Mammary epithelial cell (primary cell): ENCODE measurements at regions of chr21 and their contacts with region 1.

Region 1: DNA sequence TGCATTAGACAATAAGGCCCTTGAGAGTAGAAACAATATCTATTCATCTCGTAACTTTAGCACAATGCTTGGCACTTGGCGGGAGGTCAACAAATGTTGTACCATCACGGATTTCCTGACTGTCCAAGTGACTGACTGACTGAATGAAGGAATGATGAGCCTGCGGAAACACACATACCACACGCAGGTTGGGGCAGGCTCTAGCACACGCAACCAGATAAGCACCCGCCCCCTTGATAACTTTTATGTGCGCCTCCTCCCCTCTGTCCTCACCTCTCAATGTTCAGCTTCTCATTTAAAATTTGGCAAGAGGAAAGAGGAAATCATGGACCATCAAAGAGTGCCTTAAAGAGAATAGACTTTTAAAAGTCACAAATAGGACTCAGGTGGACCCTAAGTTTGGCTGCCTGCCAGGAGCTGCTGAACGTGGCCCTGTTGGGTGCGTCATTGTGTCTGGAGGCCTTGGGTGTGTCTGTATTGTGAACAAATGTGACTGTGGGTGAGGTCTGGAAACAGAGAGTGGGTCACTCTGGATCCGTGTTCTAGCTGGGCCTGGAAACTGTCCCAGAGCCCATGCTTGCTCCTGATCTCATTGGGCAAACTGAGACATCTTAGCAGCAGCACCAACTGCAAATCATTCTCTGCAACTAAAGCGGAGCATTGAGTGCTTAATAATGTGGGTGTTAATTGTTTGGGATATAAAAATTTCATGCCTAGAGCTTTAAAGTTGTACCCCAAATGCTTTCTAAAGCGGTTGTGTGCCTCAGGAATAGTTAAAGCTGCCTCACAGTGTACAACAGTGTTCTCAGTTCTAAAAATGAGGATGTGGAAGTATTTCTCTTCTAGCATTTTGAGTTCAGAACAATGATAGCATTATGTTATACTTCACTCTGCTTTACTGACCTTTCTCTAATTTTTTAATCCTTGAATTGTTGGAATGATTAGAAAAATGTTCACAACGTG is 47.6 kb upstream of the ABCG1 start:
- DNase-seq: peak; percentile 87
- H3K4me3 ChIP-seq: no peak overlapping the region
- H3K27ac ChIP-seq: peak overlapping the region; percentile 97
- H3K4me1 ChIP-seq: peaks cover 19% of the 10 kb centered on the region
- H3K27me3 ChIP-seq: no peaks in the 10 kb centered on the region
- CTCF ChIP-seq: no peak

Region 2: GRCh38 chr21:42199488-42200458 is 28.4 kb after region 1 on chr21:
- CTCF ChIA-PET with region 1: no interaction called
- dilution Hi-C with region 1: no loop called
- in situ Hi-C with region 1: no loop called
- intact Hi-C with region 1: loop called (anchors 1 kb)
- DNase-seq: peak; percentile 73
- H3K4me3 ChIP-seq: no peak overlapping the region
- H3K27ac ChIP-seq: peak overlapping the region; percentile 57
- H3K4me1 ChIP-seq: peaks cover 29% of the 10 kb centered on the region
- H3K27me3 ChIP-seq: no peaks in the 10 kb centered on the region
- CTCF ChIP-seq: no peak

Region 3: DNA sequence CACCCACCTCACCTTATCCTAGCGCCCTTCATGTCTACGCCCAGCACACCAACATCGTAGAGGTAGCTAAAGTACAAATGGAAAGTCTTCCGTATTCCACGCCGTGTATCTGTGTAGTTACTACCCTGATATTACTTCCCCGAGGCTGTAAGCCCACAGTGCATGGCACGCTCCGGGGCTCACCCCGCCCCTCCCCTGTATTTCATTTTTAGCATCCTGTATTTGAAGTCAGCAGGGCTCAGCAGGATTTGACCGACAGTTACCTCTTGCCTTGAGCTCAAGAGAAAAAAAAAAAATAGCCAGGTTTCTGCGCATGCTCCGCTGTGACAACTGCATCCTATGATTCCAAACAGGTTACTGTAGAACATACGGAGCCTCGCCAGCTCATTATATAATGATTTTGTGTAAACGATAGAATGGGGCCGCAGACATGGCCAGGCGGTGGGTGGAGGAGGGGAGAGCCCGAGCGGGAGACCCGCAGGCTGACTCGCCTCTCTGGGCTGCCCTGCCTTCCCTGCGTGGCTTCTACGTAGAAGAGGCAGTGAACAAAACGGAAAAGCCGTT is 48.8 kb after region 1 on chr21:
- CTCF ChIA-PET with region 1: no interaction called
- dilution Hi-C with region 1: loop called (anchors 5 kb)
- in situ Hi-C with region 1: no loop called
- intact Hi-C with region 1: loop called (anchors 1 kb)
- DNase-seq: peak; percentile 77
- H3K4me3 ChIP-seq: peak overlapping the region; percentile 55 to 70 (median 64)
- H3K27ac ChIP-seq: no peak overlapping the region
- H3K4me1 ChIP-seq: peaks cover 33% of the 10 kb centered on the region
- H3K27me3 ChIP-seq: no peaks in the 10 kb centered on the region
- CTCF ChIP-seq: no peak

Region 4: DNA sequence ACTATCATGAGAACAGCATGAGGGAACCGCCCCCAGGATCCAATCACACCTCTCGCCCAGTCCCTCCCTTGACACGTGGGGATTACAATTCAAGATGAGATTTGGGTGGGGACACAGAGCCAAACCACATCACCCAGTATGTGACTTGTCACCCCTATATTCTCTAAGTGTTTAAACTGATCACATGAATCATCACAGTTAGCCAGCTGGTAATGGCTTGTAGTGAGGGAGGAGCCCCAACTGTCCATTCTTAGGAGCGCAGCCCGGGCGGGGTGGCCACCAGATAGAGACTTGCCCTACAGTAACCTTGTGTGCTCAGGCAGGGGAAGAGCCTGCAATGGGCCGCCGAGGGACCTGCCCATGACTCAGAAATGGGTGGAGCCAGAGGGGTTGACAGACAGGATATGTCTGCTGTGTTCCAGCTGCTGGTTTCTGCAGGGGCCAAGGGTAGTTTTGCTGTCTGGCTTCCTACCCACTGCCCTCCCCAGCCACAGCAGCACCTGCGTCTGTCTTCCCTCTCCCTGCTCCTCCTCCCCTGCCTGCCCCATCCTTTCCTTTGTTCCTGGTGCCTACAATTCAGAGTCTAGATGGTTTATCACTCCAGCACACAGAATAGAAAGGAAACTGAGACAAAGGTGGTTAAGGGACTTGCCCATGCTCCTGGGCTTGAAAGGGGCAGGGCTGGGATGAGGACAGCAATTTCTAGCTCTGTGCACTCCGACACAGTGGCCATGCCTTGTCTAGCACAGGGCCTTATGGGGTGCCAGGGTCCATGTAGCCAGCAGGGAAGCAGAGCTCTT is 56.7 kb after region 1 on chr21:
- CTCF ChIA-PET with region 1: no interaction called
- dilution Hi-C with region 1: loop called (anchors 5 kb)
- in situ Hi-C with region 1: no loop called
- intact Hi-C with region 1: loop called (anchors 2 kb)
- DNase-seq: peak; percentile 95
- H3K4me3 ChIP-seq: no peak overlapping the region
- H3K27ac ChIP-seq: peak overlapping the region; percentile 5
- H3K4me1 ChIP-seq: peaks cover 17% of the 10 kb centered on the region
- H3K27me3 ChIP-seq: no peaks in the 10 kb centered on the region
- CTCF ChIP-seq: peak in 1 of 2 donors; percentile 6